ENCODE measurements at regions of chr3 and their contacts with region 1.

Region 1: DNA sequence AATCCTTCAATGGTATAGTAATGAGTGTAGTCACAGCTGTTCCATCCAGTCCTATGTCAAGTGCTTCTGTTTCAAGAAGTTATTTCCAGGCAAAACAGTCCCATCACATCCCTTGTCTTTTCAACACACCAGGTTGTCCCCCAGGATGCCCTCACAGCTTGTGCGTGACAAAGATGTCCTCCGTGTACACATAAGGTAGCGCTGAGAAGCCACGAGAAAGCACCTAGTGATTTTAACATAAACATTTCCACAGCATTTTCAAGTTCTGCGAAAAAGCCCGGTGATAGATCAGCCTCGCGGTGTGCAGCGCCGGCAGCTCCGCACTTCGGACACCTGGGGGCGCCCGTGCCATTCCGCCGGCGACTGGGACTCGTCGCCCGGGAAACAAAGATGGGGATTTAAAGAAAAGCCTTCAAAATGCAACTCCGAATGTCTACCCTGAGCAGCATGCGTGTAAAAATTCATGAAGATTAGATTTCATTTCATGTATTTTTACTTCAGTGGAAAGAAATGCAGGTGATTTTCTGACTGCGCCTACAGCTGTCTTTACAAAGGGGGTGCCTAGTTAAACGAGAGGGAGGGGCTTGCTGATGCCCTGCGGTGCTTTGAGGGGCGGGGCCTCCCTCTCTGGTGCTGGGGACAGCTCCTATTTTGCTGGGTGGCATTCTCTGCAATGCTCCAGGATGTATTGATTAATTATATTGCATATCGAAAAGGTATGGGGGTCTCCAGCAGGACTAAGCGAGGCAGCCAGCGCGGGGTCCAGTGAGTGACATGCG is 49.9 kb downstream of the KY start:
- DNase-seq: peak; percentile 59 to 78
- ATAC-seq: peak; percentile 76 to 92 (median 79)
- H3K4me3 ChIP-seq: no peak overlapping the region
- H3K27ac ChIP-seq: no peak overlapping the region
- H3K4me1 ChIP-seq: no peaks in the 10 kb centered on the region
- H3K27me3 ChIP-seq: no peaks in the 10 kb centered on the region
- CTCF ChIP-seq: peak; percentile 98

Region 2: GRCh38 chr3:134180761-134181160 is 420.1 kb before region 1 on chr3:
- intact Hi-C with region 1: no loop called
- DNase-seq: no peak
- ATAC-seq: no peak
- H3K4me3 ChIP-seq: no peak overlapping the region
- H3K27ac ChIP-seq: no peak overlapping the region
- H3K4me1 ChIP-seq: no peaks in the 10 kb centered on the region
- H3K27me3 ChIP-seq: no peaks in the 10 kb centered on the region
- CTCF ChIP-seq: no peak

Region 3: DNA sequence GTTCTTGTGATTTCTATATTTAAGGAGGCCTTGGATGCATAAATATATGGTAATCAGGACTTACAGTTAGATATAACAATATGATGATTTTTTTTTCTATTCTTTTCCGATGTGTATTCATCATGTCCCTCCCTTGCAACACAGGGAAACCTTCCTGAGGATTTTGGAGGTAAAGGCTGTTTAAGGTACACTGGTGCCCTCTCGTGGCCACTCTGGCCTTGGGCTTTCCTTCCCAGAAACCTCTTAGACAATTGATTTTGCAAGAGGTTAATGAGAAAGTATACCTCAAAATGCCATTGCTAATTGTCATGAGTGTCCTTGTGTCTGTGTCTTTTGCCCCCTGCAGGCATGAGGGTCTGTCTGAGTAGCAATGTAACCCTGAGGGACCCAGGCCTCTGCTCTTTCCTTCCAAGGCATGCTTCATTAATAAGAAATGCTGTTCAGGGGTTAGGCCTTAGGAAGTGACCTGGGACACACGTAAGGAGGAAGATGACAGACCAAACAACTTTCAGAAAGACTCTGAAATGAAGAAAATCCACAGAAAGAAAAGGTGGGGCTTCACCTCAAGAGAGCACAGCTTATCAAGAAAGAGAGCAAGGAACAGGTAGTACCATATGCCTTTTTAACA is 1294.3 kb after region 1 on chr3:
- intact Hi-C with region 1: loop called (anchors 2 to 10 kb)
- DNase-seq: peak; percentile 62 to 83
- ATAC-seq: peak; percentile 69 to 87 (median 80)
- H3K4me3 ChIP-seq: no peak overlapping the region
- H3K27ac ChIP-seq: no peak overlapping the region
- H3K4me1 ChIP-seq: no peaks in the 10 kb centered on the region
- H3K27me3 ChIP-seq: no peaks in the 10 kb centered on the region
- CTCF ChIP-seq: peak; percentile 86